Activated CD4-positive, alpha-beta T cell treated with anti-CD3 and anti-CD28 coated beads, Interleukin-2, amount 10 ng/mL, durations not matched to agents 7 days and 5 days (primary cell): ENCODE measurements at regions of chr20 and their contacts with region 1.

Region 1: GRCh38 chr20:36439040-36439730 is 102.1 kb upstream of the MYL9 start:
- DNase-seq: peak; percentile 70
- H3K4me3 Mint-ChIP-seq: no peak overlapping the region
- H3K27ac Mint-ChIP-seq: no peak overlapping the region
- H3K4me1 Mint-ChIP-seq: peaks cover 3% of the 10 kb centered on the region
- H3K27me3 Mint-ChIP-seq: peaks cover 6% of the 10 kb centered on the region

Region 2: GRCh38 chr20:36344517-36345136 is 94.6 kb before region 1 on chr20:
- CTCF ChIA-PET with region 1: no interaction called
- POLR2A ChIA-PET with region 1: no interaction called
- DNase-seq: peak; percentile 49
- H3K4me3 Mint-ChIP-seq: no peak overlapping the region
- H3K27ac Mint-ChIP-seq: no peak overlapping the region
- H3K4me1 Mint-ChIP-seq: no peaks in the 10 kb centered on the region
- H3K27me3 Mint-ChIP-seq: no peaks in the 10 kb centered on the region

Region 3: DNA sequence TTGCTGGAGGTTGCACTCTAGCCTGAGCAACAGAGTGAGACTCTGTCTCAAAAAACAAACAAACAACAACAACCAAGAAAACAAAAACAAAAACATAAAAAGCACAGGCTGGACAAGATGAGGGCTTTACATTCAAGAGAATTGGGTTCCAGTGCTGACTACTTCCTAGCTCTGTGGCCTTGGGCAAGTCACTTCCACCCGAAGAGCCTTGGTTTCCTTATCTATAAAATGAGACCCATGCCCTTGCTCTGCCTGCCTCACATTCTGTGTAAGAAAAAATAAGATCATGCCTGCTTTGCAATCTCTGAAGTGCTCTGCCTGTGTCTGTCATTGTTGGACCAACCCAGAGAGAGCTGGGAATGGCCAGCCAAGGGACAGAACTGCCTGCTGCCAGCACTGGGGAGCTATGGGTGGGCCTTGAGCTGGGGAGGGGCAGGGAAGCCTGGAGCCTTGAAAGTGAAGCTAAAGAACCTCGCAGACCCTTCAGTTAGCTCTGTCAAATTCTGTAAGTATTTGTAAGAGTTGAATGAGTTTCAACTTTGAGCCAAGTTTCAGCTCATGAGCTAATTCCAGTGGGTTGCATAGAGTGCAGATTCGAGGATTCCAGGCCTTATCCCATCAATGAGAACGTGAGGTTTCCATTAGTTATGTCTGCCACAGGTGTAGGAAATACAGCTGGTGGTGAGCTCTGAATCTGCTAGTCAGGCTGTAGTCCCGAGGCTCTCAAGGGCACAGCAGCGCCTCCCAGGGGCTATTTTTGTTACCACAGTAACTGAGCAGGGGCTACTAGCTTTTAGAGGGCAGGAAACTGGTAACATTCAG is 39.8 kb before region 1 on chr20:
- CTCF ChIA-PET with region 1: interaction called, 12 read pairs
- POLR2A ChIA-PET with region 1: no interaction called
- DNase-seq: peak; percentile 43
- H3K4me3 Mint-ChIP-seq: no peak overlapping the region
- H3K27ac Mint-ChIP-seq: no peak overlapping the region
- H3K4me1 Mint-ChIP-seq: no peaks in the 10 kb centered on the region
- H3K27me3 Mint-ChIP-seq: peaks cover 16% of the 10 kb centered on the region

Region 4: GRCh38 chr20:36449663-36450062 is 10.5 kb after region 1 on chr20:
- CTCF ChIA-PET with region 1: interaction called, 11 read pairs
- POLR2A ChIA-PET with region 1: no interaction called
- DNase-seq: no peak
- H3K4me3 Mint-ChIP-seq: no peak overlapping the region
- H3K27ac Mint-ChIP-seq: no peak overlapping the region
- H3K4me1 Mint-ChIP-seq: peaks cover 2% of the 10 kb centered on the region
- H3K27me3 Mint-ChIP-seq: no peaks in the 10 kb centered on the region